A549 (cell line): ENCODE measurements at regions of chr2 and their contacts with region 1.

Region 1: GRCh38 chr2:240851078-240851991 is 17.3 kb upstream of the AGXT start:
- DNase-seq: peak; percentile 76 to 81
- ATAC-seq: peak; percentile 92 to 98
- H3K4me3 ChIP-seq: no peak overlapping the region
- H3K27ac ChIP-seq: no peak overlapping the region
- H3K4me1 ChIP-seq: no peaks in the 10 kb centered on the region
- CTCF ChIP-seq: peak; percentile 90
- EP300 ChIP-seq: no peak
- POLR2A ChIP-seq: no peak
- RAD21 ChIP-seq: peak; percentile 94 to 97

Region 2: GRCh38 chr2:240640939-240641338 is 210.4 kb before region 1 on chr2:
- CTCF ChIA-PET with region 1: no interaction called
- POLR2A ChIA-PET with region 1: no interaction called
- DNase-seq: peak; percentile 70 to 73
- ATAC-seq: peak; percentile 77 to 91
- H3K4me3 ChIP-seq: no peak overlapping the region
- H3K27ac ChIP-seq: no peak overlapping the region
- H3K4me1 ChIP-seq: no peaks in the 10 kb centered on the region
- CTCF ChIP-seq: peak; percentile 45
- EP300 ChIP-seq: no peak
- POLR2A ChIP-seq: no peak
- RAD21 ChIP-seq: peak; percentile 28 to 55; a peak in 3 of 5 replicates

Region 3: DNA sequence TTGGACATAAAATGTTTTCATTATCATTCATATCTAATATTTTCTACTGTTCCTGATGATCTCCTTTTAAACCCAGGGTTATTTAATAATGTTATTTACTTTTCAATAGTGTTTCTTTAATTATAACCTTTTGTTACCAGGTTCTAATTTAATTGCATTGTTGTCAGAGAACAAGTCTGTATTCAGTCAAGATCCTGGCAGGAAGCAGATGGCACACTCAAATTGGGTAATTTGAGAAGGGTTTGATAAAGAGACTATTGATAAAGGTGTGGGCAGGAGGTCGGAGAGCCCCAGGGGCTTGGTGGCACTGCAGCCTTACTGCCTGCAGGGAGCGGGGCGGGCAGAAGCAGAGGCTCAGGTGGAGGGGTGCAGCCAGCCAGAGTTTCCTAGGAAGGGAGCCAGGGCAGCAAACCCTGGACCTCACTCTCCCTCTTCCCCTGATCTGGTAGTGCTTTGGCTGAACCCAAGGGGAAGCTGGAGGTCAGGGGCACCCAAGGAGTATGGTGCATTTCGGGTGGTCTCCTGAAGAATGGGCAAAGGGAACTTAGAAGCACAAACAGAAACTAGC is 29.0 kb before region 1 on chr2:
- CTCF ChIA-PET with region 1: interaction called, 22 read pairs
- POLR2A ChIA-PET with region 1: no interaction called
- DNase-seq: no peak
- ATAC-seq: no peak
- H3K4me3 ChIP-seq: no peak overlapping the region
- H3K27ac ChIP-seq: no peak overlapping the region
- H3K4me1 ChIP-seq: peaks cover 22% of the 10 kb centered on the region
- CTCF ChIP-seq: no peak
- EP300 ChIP-seq: no peak
- POLR2A ChIP-seq: no peak
- RAD21 ChIP-seq: no peak

Region 4: DNA sequence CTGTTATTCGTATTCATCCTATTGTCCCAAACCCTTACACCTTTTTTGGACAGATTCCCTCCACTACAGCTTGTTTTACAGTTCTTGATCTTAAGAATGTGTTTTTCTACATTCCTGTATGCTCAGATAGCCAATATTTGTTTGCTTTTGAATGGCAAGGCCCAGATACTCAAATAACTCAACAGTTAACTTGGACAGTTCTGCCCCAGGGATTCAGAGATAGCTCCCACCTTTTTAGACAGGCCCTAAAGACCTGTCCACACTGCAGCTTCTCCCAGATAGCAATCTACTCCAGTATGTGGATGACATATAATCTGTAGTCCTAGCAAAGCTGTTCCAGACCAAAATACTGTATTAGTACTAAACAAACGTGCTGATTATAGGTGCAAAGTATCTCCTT is 10.2 kb after region 1 on chr2:
- CTCF ChIA-PET with region 1: interaction called, 44 read pairs
- POLR2A ChIA-PET with region 1: no interaction called
- DNase-seq: no peak
- ATAC-seq: no peak
- H3K4me3 ChIP-seq: no peak overlapping the region
- H3K27ac ChIP-seq: no peak overlapping the region
- H3K4me1 ChIP-seq: no peaks in the 10 kb centered on the region
- CTCF ChIP-seq: no peak
- EP300 ChIP-seq: no peak
- POLR2A ChIP-seq: no peak
- RAD21 ChIP-seq: no peak

Region 5: GRCh38 chr2:240876475-240877251 is 25.3 kb after region 1 on chr2:
- CTCF ChIA-PET with region 1: interaction called, 14 read pairs
- POLR2A ChIA-PET with region 1: no interaction called
- DNase-seq: no peak
- ATAC-seq: no peak
- H3K4me3 ChIP-seq: no peak overlapping the region
- H3K27ac ChIP-seq: no peak overlapping the region
- H3K4me1 ChIP-seq: no peaks in the 10 kb centered on the region
- CTCF ChIP-seq: no peak
- EP300 ChIP-seq: no peak
- POLR2A ChIP-seq: no peak
- RAD21 ChIP-seq: no peak

Region 6: GRCh38 chr2:241659150-241659739 is 807.9 kb after region 1 on chr2:
- CTCF ChIA-PET with region 1: interaction called, 11 read pairs
- POLR2A ChIA-PET with region 1: no interaction called
- DNase-seq: peak; percentile 27 to 82
- ATAC-seq: peak; percentile 83 to 87
- H3K4me3 ChIP-seq: no peak overlapping the region
- H3K27ac ChIP-seq: no peak overlapping the region
- H3K4me1 ChIP-seq: no peaks in the 10 kb centered on the region
- CTCF ChIP-seq: peak; percentile 64
- EP300 ChIP-seq: no peak
- POLR2A ChIP-seq: no peak
- RAD21 ChIP-seq: peak; percentile 67 to 76